K562 (cell line): ENCODE measurements at regions of chr3 and their contacts with region 1.

Region 1: DNA sequence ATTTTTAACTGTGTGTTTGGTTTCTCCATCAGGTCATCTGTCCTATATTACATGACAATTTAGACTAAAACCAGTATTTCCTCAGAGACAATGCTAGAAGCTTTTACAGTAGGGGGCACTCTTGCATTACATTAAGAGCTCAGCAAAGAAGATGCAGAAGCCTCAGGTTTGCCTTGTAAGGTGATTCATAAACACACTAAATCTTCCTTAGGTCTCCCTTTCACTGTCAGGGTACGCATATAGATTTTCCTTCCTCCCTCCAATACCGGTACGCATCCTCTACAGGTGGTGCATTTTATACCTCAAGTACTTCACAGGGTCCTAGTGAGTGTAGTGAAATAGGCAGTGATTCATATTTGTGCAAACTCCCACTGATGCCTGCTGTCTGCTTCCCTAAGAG is 46.5 kb downstream of the CD86 start:
- DNase-seq: peak in 2 of 4 experiments; percentile 24 to 51
- ATAC-seq: peak; percentile 73
- H3K4me3 ChIP-seq: no peak overlapping the region
- H3K27ac ChIP-seq: no peak overlapping the region
- H3K4me1 ChIP-seq: no peaks in the 10 kb centered on the region
- H3K27me3 ChIP-seq: no peaks in the 10 kb centered on the region; a peak in 1 of 5 replicates
- CTCF ChIP-seq: peak; percentile 27 to 70 (median 51); a peak in 4 of 6 replicates
- EP300 ChIP-seq: no peak
- POLR2A ChIP-seq: no peak
- RAD21 ChIP-seq: peak; percentile 67 to 84

Region 2: DNA sequence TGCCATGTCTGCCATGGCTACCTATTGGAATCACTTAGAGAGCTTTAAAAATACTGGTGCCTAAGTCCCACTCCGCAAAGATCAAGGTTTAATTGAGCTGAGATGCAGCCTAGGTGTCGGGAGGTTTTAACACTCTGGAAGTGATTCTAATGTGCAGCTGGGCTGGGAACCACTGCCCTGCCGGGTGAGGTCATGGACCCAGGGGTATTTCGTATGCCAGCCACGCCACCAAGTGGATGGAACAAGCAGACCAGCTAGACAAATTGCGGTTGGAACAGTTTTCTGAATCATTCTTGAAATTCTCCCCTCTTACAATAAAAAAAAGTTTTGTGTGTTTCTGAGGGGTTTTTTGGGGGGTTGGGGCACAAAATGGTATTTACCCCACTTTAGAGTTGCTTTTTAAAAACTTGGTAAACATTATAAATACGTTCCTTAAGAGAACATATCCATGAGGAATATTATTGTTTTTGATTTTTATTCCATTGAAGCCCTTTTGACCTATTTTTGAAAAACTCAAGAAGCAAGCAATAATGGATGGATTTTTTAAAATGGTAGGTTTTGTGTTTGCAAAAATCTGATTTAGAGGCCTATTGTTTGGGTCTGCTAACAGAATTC is 157.2 kb after region 1 on chr3:
- CTCF ChIA-PET with region 1: interaction called, 3 read pairs
- POLR2A ChIA-PET with region 1: interaction called, 3 read pairs
- in situ Hi-C with region 1: no loop called
- intact Hi-C with region 1: loop called (anchors 1 kb)
- DNase-seq: peak; percentile 8 to 38 (median 20)
- ATAC-seq: peak; percentile 75
- H3K4me3 ChIP-seq: no peak overlapping the region
- H3K27ac ChIP-seq: no peak overlapping the region
- H3K4me1 ChIP-seq: no peaks in the 10 kb centered on the region
- H3K27me3 ChIP-seq: peaks cover 5 to 15% of the 10 kb centered on the region in 2 experiments; a peak in 3 of 5 replicates
- CTCF ChIP-seq: peak; percentile 44 to 58 (median 57); a peak in 5 of 6 replicates
- EP300 ChIP-seq: no peak
- POLR2A ChIP-seq: no peak
- RAD21 ChIP-seq: peak; percentile 58 to 68

Region 3: GRCh38 chr3:122299872-122300460 is 198.3 kb after region 1 on chr3:
- CTCF ChIA-PET with region 1: no interaction called
- POLR2A ChIA-PET with region 1: no interaction called
- in situ Hi-C with region 1: no loop called
- intact Hi-C with region 1: loop called (anchors 1 kb)
- DNase-seq: peak; percentile 26 to 46 (median 30)
- ATAC-seq: no peak
- H3K4me3 ChIP-seq: no peak overlapping the region
- H3K27ac ChIP-seq: no peak overlapping the region
- H3K4me1 ChIP-seq: no peaks in the 10 kb centered on the region
- H3K27me3 ChIP-seq: no peaks in the 10 kb centered on the region
- CTCF ChIP-seq: peak; percentile 44 to 64 (median 46); a peak in 3 of 6 replicates
- EP300 ChIP-seq: no peak
- POLR2A ChIP-seq: no peak
- RAD21 ChIP-seq: peak; percentile 49 to 69

Region 4: GRCh38 chr3:122356415-122356814 is 254.8 kb after region 1 on chr3:
- CTCF ChIA-PET with region 1: interaction called, 4 read pairs
- POLR2A ChIA-PET with region 1: no interaction called
- in situ Hi-C with region 1: no loop called
- intact Hi-C with region 1: loop called (anchors 1 kb)
- DNase-seq: peak in 3 of 4 experiments; percentile 16 to 50 (median 39)
- ATAC-seq: peak; percentile 82
- H3K4me3 ChIP-seq: no peak overlapping the region
- H3K27ac ChIP-seq: no peak overlapping the region
- H3K4me1 ChIP-seq: peaks cover 0 to 8% of the 10 kb centered on the region in 2 experiments; a peak in 3 of 5 replicates
- H3K27me3 ChIP-seq: no peaks in the 10 kb centered on the region
- CTCF ChIP-seq: peak; percentile 59 to 68 (median 62)
- EP300 ChIP-seq: no peak
- POLR2A ChIP-seq: no peak
- RAD21 ChIP-seq: peak; percentile 72 to 74

Region 5: DNA sequence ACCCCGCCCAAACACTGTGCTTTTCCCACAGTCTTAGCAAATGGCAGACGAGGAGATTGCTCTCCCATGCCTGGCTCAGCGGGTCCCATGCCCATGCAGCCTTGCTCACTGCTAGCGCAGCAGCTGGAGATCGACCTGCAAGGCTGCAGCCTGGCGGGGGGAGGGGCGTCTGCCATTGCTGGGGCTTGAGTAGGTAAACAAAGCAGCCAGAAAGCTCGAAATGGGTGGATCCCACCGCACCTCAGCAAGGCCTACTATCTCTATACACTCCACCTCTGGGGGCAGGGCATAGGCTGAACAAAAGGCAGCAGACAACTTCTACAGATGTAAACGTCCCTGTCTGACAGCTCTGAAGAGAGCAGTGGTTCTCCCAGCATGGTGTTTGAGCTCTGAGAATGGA is 341.4 kb after region 1 on chr3:
- CTCF ChIA-PET with region 1: no interaction called
- POLR2A ChIA-PET with region 1: no interaction called
- in situ Hi-C with region 1: no loop called
- intact Hi-C with region 1: no loop called
- DNase-seq: peak in 1 of 4 experiments; percentile 6
- ATAC-seq: no peak
- H3K4me3 ChIP-seq: no peak overlapping the region
- H3K27ac ChIP-seq: no peak overlapping the region
- H3K4me1 ChIP-seq: 0 out of 5 replicates have a peak, but pooled peaks cover 0 to 3% of the 10 kb centered on the region in 2 experiments
- H3K27me3 ChIP-seq: no peaks in the 10 kb centered on the region
- CTCF ChIP-seq: no peak
- EP300 ChIP-seq: no peak
- POLR2A ChIP-seq: no peak
- RAD21 ChIP-seq: no peak